ENCODE measurements at regions of chr10 and their contacts with region 1.

Region 1: DNA sequence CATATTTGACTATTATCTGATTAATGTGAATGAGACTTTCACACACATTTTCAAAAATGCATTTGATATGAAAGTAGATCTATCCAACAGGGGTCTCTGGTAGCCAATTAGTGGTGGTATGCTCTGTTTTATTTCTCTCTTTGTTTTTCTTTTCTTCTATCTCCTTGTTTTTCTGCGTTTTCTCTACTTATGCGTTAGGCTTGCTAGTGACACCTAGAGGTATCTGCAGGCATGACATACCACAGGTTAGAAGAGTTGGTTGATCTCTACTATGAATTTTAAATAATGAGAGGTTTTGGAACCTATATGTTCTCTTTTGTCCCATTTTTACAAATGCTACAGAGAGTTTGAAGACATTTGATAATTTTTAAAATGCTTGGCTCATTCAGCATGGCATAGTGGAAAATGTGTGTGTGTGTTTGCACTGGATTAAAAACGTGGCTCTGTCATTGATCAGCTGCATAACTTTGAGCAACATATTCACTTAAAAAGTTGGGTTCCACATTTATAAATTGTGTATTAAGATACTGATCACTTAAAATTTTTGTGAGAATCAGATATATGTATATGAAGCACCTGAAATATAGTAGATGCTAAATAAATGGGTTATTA is 28.1 kb upstream of the PLXDC2 start:
- DNase-seq: peak; percentile 24
- H3K4me3 Mint-ChIP-seq: no peak overlapping the region
- H3K27ac Mint-ChIP-seq: no peak overlapping the region
- H3K4me1 Mint-ChIP-seq: no peaks in the 10 kb centered on the region
- H3K27me3 Mint-ChIP-seq: no peaks in the 10 kb centered on the region
- CTCF ChIP-seq: peak; percentile 48

Region 2: GRCh38 chr10:18689498-18689897 is 1098.7 kb before region 1 on chr10:
- CTCF ChIA-PET with region 1: no interaction called
- intact Hi-C with region 1: loop called (anchors 1 kb)
- DNase-seq: no peak
- H3K4me3 Mint-ChIP-seq: no peak overlapping the region
- H3K27ac Mint-ChIP-seq: no peak overlapping the region
- H3K4me1 Mint-ChIP-seq: peaks cover 19% of the 10 kb centered on the region
- H3K27me3 Mint-ChIP-seq: no peaks in the 10 kb centered on the region
- CTCF ChIP-seq: peak; percentile 35

Region 3: DNA sequence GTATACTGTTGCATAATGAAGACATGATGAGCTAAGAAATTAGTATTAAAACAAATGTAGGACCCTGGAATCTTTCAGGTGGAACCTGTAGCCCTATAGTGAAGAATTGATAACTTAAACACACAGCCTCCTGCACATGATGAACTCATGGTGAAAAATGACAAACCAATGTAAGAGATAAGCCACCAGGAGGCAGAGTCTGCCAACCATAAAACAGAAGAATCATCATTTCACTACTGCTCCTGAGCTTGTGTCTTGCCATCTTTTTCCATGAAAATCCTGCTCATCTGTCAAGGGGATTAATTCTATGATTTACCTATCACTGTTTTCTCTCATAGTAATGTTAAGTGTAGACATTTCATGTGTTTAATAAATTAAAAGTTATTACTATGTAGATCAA is 375.6 kb before region 1 on chr10:
- CTCF ChIA-PET with region 1: no interaction called
- intact Hi-C with region 1: loop called (anchors 5 kb)
- DNase-seq: no peak
- H3K4me3 Mint-ChIP-seq: no peak overlapping the region
- H3K27ac Mint-ChIP-seq: no peak overlapping the region
- H3K4me1 Mint-ChIP-seq: no peaks in the 10 kb centered on the region
- H3K27me3 Mint-ChIP-seq: no peaks in the 10 kb centered on the region
- CTCF ChIP-seq: no peak

Region 4: DNA sequence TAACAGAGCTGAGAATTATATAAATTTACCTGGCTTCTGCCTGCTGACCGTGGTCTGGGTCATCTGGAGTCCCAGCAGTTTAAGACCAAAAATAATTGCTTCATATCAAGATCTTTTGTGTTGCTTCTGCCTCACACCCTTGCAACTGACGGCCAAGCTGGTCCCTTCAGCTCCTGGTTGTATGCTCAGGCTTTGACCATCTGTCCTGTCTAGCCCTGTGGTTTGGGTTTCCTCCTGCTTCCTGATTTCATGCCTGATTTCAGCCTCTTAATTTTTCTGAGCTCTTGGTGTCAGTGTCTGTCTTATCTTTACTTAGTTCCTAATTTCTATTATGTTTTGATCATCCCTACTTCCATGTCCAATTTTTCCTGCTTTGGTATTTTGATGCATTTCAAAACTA is 59.8 kb before region 1 on chr10:
- CTCF ChIA-PET with region 1: no interaction called
- intact Hi-C with region 1: no loop called
- DNase-seq: no peak
- H3K4me3 Mint-ChIP-seq: no peak overlapping the region
- H3K27ac Mint-ChIP-seq: no peak overlapping the region
- H3K4me1 Mint-ChIP-seq: no peaks in the 10 kb centered on the region
- H3K27me3 Mint-ChIP-seq: no peaks in the 10 kb centered on the region
- CTCF ChIP-seq: no peak

Measured in Calu3 (cell line).